Endothelial cell of umbilical vein (primary cell): ENCODE measurements at regions of chr21 and their contacts with region 1.

Region 1: GRCh38 chr21:15592271-15592860 is 137.4 kb upstream of the USP25 start:
- DNase-seq: peak; percentile 65
- H3K4me3 ChIP-seq: no peak overlapping the region
- H3K27ac ChIP-seq: no peak overlapping the region
- H3K4me1 ChIP-seq: no peaks in the 10 kb centered on the region
- H3K27me3 ChIP-seq: peaks cover 0 to 3% of the 10 kb centered on the region in 2 experiments
- CTCF ChIP-seq: peak; percentile 28 to 39
- POLR2A ChIP-seq: no peak

Region 2: GRCh38 chr21:14403681-14404318 is 1188.6 kb before region 1 on chr21:
- CTCF ChIA-PET with region 1: interaction called, 9 read pairs
- POLR2A ChIA-PET with region 1: no interaction called
- dilution Hi-C with region 1: no loop called
- intact Hi-C with region 1: loop called (anchors 10 kb)
- DNase-seq: peak; percentile 45
- H3K4me3 ChIP-seq: no peak overlapping the region
- H3K27ac ChIP-seq: no peak overlapping the region
- H3K4me1 ChIP-seq: no peaks in the 10 kb centered on the region
- H3K27me3 ChIP-seq: no peaks in the 10 kb centered on the region
- CTCF ChIP-seq: peak; percentile 33 to 49
- POLR2A ChIP-seq: no peak

Region 3: GRCh38 chr21:15826147-15826780 is 233.9 kb after region 1 on chr21:
- CTCF ChIA-PET with region 1: no interaction called
- POLR2A ChIA-PET with region 1: no interaction called
- dilution Hi-C with region 1: no loop called
- intact Hi-C with region 1: loop called (anchors 5 kb)
- DNase-seq: peak; percentile 74
- H3K4me3 ChIP-seq: no peak overlapping the region
- H3K27ac ChIP-seq: no peak overlapping the region
- H3K4me1 ChIP-seq: peaks cover 7% of the 10 kb centered on the region
- H3K27me3 ChIP-seq: no peaks in the 10 kb centered on the region
- CTCF ChIP-seq: peak; percentile 36 to 40
- POLR2A ChIP-seq: no peak